ENCODE measurements at regions of chr9 and their contacts with region 1.

Region 1: DNA sequence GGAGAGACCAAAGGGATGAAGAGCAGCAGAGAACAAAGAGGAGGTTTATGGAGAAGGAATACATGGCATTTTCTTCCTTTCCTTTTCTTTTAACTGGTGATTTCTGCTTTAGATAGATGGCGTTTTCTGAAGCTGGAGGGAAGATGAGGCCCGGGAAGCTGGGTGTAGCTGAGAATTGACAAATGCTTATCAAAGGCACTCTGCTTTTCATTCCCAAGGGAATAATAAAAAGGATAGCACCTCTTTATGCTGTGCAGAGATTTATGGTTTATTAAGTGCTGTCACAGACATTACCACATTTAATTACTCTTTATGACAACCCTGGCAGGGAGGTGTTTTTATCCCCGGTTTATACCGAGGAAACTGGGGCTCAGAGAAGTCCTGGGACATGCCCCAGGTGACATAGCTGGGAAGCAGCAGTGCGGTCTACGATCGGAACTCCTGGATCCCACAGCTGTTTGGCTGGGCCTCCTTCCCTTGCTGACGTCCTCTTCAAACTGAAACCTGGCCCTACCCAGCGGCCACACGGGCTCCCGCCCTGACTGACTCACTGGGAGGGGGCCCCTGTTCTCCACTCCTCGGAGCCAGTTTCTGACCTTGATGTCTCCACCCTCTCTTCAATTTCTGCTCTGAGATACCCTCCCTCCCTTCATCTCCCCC is 8.2 kb upstream of the EPB41L4B start:
- DNase-seq: peak; percentile 84 to 88
- H3K4me3 ChIP-seq: peak overlapping the region; percentile 35; the same call in 1 of the 2 replicates
- H3K27ac ChIP-seq: peak overlapping the region; percentile 73
- H3K4me1 ChIP-seq: peaks cover 62% of the 10 kb centered on the region
- H3K27me3 ChIP-seq: no peaks in the 10 kb centered on the region
- CTCF ChIP-seq: no peak

Region 2: GRCh38 chr9:109341565-109341964 is 12.5 kb after region 1 on chr9:
- CTCF ChIA-PET with region 1: interaction called, 17 read pairs
- POLR2A ChIA-PET with region 1: interaction called, 34 read pairs
- intact Hi-C with region 1: loop called (anchors 1 kb)
- DNase-seq: peak; percentile 55 to 73
- H3K4me3 ChIP-seq: no peak overlapping the region
- H3K27ac ChIP-seq: 0 out of 2 replicates have a peak overlapping the region, but pooled peaks have one; percentile 18
- H3K4me1 ChIP-seq: peaks cover 34% of the 10 kb centered on the region
- H3K27me3 ChIP-seq: no peaks in the 10 kb centered on the region
- CTCF ChIP-seq: no peak

Region 3: GRCh38 chr9:109381011-109381729 is 52.1 kb after region 1 on chr9:
- CTCF ChIA-PET with region 1: no interaction called
- POLR2A ChIA-PET with region 1: interaction called, 12 read pairs
- intact Hi-C with region 1: no loop called
- DNase-seq: peak; percentile 25 to 60
- H3K4me3 ChIP-seq: no peak overlapping the region
- H3K27ac ChIP-seq: 0 out of 2 replicates have a peak overlapping the region, but pooled peaks have one; percentile 30
- H3K4me1 ChIP-seq: peaks cover 14% of the 10 kb centered on the region; the same call in 1 of the 2 replicates
- H3K27me3 ChIP-seq: no peaks in the 10 kb centered on the region
- CTCF ChIP-seq: no peak

Region 4: GRCh38 chr9:109428854-109429253 is 99.7 kb after region 1 on chr9:
- CTCF ChIA-PET with region 1: no interaction called
- POLR2A ChIA-PET with region 1: no interaction called
- intact Hi-C with region 1: no loop called
- DNase-seq: no peak
- H3K4me3 ChIP-seq: no peak overlapping the region
- H3K27ac ChIP-seq: no peak overlapping the region
- H3K4me1 ChIP-seq: no peaks in the 10 kb centered on the region
- H3K27me3 ChIP-seq: no peaks in the 10 kb centered on the region
- CTCF ChIP-seq: no peak

Measured in PC-9 (cell line).